ENCODE measurements at regions of chr9 and their contacts with region 1.

Region 1: GRCh38 chr9:72364679-72365524 is at the start of gene ZFAND5:
- DNase-seq: peak; percentile 94
- H3K4me3 Mint-ChIP-seq: peak within 1 kb of the TSS; percentile 82
- H3K27ac Mint-ChIP-seq: peak within 1 kb of the TSS; percentile 95
- H3K4me1 Mint-ChIP-seq: peaks cover 31% of the 10 kb centered on the region
- H3K27me3 Mint-ChIP-seq: no peaks in the 10 kb centered on the region
- total RNA-seq, gene ZFAND5: 71.9 to 73.2 TPM

Region 2: DNA sequence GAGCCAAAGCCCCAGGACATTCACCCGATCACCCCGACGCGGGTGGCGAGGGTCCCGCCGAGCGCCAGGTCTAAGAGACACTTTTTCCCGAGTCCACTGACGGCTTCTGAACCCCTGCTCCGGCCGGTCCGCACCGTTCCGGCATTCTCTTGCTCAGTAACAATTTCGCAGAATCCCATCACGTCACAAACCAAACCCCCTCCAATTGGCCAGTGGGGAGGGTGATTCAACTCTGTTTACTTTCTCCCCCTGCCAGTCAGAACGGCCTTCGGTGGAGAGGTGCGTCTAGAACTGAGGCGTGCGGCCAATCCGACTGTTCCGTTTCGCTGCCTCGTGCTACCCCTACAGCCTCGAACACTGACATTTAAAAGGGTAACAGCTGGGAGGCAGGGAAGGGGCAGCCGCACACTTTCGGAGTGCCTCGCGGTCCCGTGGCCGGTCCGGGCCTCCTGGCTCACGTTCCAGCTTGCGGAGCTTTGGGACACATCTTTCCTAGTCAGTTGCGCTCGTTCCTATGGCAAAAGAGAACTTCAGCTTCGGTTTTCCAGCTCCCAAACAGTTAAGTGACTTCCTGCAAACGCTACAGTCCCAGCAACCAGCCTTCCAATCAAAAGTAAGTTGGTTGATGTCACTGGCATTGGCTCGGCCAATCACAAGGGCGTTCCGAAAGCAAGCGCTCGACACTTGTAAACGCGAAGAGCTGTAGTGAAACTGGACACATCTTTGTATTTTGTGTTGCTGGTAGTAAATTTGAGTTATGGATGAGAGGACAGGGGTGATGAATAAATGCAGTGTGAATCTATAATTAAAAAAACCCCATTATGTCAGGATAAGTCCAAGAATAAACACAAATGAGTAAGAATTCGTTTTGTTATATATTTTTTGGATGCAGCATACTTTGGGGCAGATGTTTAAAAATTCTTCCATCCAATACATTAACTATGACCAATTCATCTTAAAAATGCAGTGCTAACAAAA is 1950.8 kb before region 1 on chr9 and contains the start of gene KLF9:
- CTCF ChIA-PET with region 1: no interaction called
- intact Hi-C with region 1: loop called (anchors 2 kb)
- DNase-seq: peak; percentile 96
- H3K4me3 Mint-ChIP-seq: peak within 1 kb of the TSS; percentile 100
- H3K27ac Mint-ChIP-seq: peak within 1 kb of the TSS; percentile 100
- H3K4me1 Mint-ChIP-seq: peaks cover 39% of the 10 kb centered on the region
- H3K27me3 Mint-ChIP-seq: no peaks in the 10 kb centered on the region
- total RNA-seq, gene KLF9: 44.2 to 45.0 TPM

Region 3: GRCh38 chr9:72292256-72292682 is 72.6 kb before region 1 on chr9:
- CTCF ChIA-PET with region 1: interaction called, 3 read pairs
- intact Hi-C with region 1: loop called (anchors 5 kb)
- DNase-seq: no peak
- H3K4me3 Mint-ChIP-seq: no peak overlapping the region
- H3K27ac Mint-ChIP-seq: no peak overlapping the region
- H3K4me1 Mint-ChIP-seq: peaks cover 2% of the 10 kb centered on the region
- H3K27me3 Mint-ChIP-seq: no peaks in the 10 kb centered on the region

Region 4: GRCh38 chr9:72333709-72334108 is 31.2 kb before region 1 on chr9:
- CTCF ChIA-PET with region 1: no interaction called
- intact Hi-C with region 1: no loop called
- DNase-seq: peak; percentile 20
- H3K4me3 Mint-ChIP-seq: no peak overlapping the region
- H3K27ac Mint-ChIP-seq: no peak overlapping the region
- H3K4me1 Mint-ChIP-seq: no peaks in the 10 kb centered on the region
- H3K27me3 Mint-ChIP-seq: no peaks in the 10 kb centered on the region

Region 5: DNA sequence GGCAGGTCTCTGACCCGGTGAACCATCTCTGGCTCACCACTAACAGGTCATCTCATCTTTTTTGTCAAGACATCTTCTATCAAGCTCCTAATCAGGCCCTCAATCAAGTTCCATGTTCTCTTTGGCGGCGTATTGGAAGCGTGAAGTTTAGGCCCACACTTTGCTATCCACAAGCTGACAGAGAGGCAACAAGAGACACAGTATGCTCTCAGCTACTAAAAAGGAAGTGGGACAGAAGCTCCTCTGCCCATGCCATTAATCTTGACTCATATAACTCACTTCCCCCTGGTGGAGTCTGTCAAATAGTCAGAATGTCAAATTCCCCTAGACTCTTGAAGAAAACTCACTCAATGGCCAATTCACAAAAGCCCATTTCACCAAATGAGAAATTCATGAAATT is 79.0 kb after region 1 on chr9:
- CTCF ChIA-PET with region 1: no interaction called
- intact Hi-C with region 1: loop called (anchors 1 kb)
- DNase-seq: peak; percentile 12
- H3K4me3 Mint-ChIP-seq: no peak overlapping the region
- H3K27ac Mint-ChIP-seq: no peak overlapping the region
- H3K4me1 Mint-ChIP-seq: peaks cover 14% of the 10 kb centered on the region
- H3K27me3 Mint-ChIP-seq: no peaks in the 10 kb centered on the region

Region 6: DNA sequence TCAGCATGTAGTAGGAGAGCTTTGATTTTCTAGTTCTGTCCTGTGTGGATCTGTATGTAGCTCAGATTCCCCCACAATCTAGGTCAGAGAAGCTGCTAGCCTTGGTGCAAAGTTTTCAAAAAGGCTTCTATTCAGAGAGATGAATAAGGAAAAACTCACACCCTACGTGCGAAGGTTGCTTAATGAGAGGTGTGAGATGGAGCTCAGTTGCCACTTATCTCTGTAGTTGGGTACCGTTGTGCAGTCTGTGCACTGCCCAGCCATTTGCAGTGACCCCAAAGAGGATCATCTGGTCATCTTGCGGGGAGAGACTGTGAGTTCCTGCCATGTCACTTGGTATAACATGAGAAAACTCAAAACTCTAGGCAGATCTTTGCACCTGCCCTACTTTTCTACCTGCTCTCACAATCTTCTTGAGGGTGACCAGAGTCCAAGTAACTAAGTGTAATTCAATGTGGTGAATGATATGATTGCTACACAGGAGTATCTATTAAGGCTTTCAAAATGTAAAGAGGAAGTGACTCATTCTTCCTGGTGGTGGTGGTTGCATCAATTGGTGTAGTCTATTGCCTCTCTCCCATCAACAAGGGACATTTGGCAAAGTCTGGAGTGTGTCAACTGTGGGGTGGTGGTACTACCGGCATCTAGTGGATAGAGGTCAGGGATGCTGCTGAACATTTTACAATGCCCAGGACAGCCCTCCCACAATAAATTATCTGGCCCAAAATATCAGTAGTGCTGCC is 221.7 kb after region 1 on chr9:
- CTCF ChIA-PET with region 1: interaction called, 3 read pairs
- intact Hi-C with region 1: loop called (anchors 1 kb)
- DNase-seq: peak; percentile 50
- H3K4me3 Mint-ChIP-seq: no peak overlapping the region
- H3K27ac Mint-ChIP-seq: no peak overlapping the region
- H3K4me1 Mint-ChIP-seq: peaks cover 17% of the 10 kb centered on the region
- H3K27me3 Mint-ChIP-seq: no peaks in the 10 kb centered on the region

Region 7: GRCh38 chr9:73132034-73132776 is 767.3 kb after region 1 on chr9:
- CTCF ChIA-PET with region 1: no interaction called
- intact Hi-C with region 1: loop called (anchors 1 kb)
- DNase-seq: peak; percentile 76
- H3K4me3 Mint-ChIP-seq: peak overlapping the region; percentile 79
- H3K27ac Mint-ChIP-seq: peak overlapping the region; percentile 86
- H3K4me1 Mint-ChIP-seq: peaks cover 25% of the 10 kb centered on the region
- H3K27me3 Mint-ChIP-seq: no peaks in the 10 kb centered on the region

Measured in activated naive CD4-positive, alpha-beta T cell treated with anti-CD3 and anti-CD28 coated beads for 36 hours (primary cell).